ENCODE measurements at regions of chr14 and their contacts with region 1.

Region 1: DNA sequence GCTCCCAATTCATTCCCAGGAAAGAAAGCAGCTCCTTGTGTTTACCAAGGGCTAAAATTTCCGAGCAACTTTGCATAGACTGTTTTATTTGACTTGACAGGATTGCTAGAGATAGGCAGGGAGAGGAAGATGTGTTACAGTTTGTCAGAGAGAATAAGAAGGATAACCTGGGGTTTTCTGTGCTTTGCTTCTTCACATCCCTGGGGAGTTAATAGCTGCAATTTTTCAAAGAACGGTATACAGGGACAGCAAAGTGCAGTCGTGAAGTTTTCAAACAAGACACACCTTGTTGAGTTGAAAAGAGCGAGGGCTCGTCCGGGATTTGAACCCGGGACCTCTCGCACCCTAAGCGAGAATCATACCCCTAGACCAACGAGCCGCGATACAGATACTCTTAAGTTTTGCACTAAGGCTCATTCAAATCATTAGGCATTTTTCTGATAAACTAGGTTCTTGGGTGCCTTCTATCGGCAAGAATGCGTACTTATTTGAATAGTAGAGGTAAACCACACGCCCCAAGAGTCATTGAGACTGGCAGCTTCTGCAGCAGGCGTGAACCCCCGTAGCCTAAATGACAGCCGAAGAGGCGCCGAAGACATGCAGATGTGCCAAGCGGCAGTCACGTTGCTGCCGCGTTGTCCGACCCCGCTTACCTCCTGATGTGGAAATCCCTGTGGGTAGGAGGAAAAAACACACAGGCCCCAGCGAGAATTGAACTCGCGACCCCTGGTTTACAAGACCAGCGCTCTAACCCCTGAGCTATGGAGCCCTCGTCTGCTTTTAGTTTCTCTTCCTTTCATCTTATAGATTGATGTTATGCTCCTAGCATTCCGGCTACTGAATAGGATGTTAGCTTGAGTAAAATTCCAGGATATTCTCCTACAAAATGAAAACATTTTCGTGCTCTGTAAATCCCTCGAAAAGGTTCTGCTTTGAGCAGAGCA is 22.2 kb upstream of the RNASE12 start:
- DNase-seq: peak; percentile 83
- ATAC-seq: peak; percentile 92
- H3K4me3 ChIP-seq: peak overlapping the region; percentile 58
- H3K27ac ChIP-seq: peak overlapping the region; percentile 63
- H3K4me1 ChIP-seq: peaks cover 18% of the 10 kb centered on the region
- H3K27me3 ChIP-seq: no peaks in the 10 kb centered on the region
- CTCF ChIP-seq: peak; percentile 74

Region 2: DNA sequence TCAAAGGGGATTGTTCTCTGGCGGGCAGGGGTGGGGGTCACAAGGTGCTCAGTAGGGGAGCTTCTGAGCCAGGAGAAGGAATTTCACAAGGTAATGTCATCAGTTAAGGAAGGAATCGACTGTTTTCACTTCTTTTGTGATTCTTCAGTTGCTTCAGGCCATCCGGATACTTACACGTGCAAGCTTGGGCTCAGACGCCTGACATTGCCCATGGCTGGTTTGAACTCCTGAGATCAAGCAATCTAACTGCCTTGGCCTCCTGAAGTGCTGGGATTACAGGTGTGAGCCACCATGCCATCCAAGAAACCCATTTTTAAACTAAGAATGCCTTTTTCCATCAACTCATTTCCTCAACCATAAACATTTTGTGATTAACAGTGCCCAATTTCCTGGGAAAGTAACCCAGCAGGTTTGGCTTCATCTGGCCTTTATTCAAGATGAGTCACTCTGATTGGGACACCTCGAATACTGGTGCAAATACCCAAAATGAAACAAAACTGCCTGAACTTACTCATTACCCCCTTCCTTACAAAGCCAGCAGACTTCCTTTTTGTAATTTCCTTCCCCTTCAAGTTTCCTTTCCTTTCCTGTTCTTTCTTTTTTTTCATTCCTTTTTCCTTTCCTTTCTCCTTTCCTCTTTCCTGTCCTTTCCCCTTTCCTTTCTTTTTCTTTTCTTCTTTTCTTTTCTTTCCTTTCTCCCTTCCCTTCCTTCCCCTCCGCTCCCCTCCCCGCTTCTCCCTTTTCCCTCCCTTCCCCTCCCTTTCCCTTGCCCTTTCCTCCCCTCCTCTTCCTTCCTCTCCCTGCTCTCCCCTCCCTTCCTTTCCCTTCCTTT is 118.2 kb before region 1 on chr14:
- intact Hi-C with region 1: no loop called
- DNase-seq: no peak
- ATAC-seq: peak; percentile 35
- H3K4me3 ChIP-seq: no peak overlapping the region
- H3K27ac ChIP-seq: no peak overlapping the region
- H3K4me1 ChIP-seq: no peaks in the 10 kb centered on the region
- H3K27me3 ChIP-seq: no peaks in the 10 kb centered on the region
- CTCF ChIP-seq: no peak

Region 3: DNA sequence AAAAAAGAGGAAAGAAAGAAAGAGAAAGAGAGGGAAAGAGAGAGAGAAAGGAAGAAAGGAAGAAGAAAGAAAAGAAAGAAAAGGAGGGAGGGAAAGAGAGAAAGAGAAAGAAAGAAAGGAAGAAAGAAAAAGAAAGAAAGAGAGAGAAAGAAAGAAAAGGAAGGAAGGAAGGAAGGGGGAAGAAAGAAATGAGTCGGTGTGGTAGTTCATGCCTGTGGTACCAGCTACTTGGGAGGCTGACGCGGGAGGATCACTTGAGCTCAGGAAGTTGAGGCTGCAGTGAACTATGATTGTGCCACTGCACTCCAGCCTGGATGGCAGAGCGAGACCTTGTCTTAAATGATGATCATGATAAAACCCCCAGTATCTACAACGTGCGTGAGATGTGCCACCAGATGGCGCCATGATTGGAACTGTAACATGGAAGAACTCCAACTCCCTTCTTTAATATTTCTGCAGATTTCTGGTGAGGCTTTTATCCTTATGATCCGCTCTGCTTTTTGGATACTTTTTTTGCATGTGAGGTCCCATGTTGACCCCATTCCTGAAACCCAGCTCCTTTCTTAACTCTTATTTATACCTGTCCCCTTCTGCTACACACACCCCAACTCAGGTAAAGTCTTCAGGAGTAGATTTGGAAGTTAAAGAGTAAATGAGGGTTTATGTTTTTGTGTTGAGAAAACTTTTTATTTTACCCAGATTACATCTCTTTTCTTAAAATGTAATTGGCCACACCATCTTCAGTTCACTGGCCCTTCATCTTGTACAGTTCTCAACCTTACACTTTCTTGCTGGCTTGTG is 82.4 kb before region 1 on chr14:
- intact Hi-C with region 1: loop called (anchors 5 kb)
- DNase-seq: peak; percentile 77
- ATAC-seq: peak; percentile 89
- H3K4me3 ChIP-seq: no peak overlapping the region
- H3K27ac ChIP-seq: no peak overlapping the region
- H3K4me1 ChIP-seq: no peaks in the 10 kb centered on the region
- H3K27me3 ChIP-seq: no peaks in the 10 kb centered on the region
- CTCF ChIP-seq: peak; percentile 75

Region 4: DNA sequence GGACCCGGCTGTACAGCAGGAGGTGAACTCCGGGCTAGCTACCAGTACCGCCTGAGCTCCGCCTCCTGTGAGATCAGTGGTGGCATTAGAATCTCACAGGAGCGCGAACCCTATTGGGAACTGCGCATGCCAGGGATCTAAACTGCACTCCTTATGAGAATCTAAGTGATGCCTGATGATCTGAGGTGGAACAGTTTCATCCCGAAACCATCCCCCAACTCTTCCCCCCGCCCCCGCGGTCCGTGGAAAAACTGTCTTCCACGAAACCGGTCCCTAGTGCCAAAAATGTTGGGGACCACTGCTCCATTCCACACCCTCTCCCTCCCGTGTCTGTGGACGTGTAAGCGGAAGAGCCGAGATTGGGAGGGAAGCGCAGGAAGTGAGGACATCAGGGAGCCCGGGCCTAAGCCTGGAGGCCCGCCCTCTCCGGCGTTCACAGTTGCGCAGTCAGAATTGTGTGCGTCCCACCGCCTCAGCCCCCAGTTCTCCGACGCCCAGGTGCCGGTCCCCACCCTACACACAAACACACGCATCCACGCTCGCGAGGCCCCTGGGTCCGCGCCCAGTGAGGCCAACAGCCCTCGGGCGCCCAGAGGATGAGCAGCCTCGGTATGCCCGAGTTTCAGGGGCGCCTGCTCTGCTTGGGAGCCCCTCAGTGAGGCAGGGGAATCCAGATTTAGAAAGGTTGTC is 69.2 kb after region 1 on chr14:
- intact Hi-C with region 1: loop called (anchors 10 kb)
- DNase-seq: peak; percentile 93
- ATAC-seq: peak; percentile 87
- H3K4me3 ChIP-seq: peak overlapping the region; percentile 73
- H3K27ac ChIP-seq: peak overlapping the region; percentile 100
- H3K4me1 ChIP-seq: peaks cover 30% of the 10 kb centered on the region
- H3K27me3 ChIP-seq: no peaks in the 10 kb centered on the region
- CTCF ChIP-seq: no peak

Measured in upper lobe of right lung (tissue), 1 donor.